CD4-positive, alpha-beta T cell (primary cell): ENCODE measurements at regions of chr5 and their contacts with region 1.

Region 1: GRCh38 chr5:14581333-14581890 is at the start of gene OTULINL:
- DNase-seq: peak; percentile 79 to 92 (median 86)
- ATAC-seq: peak; percentile 81
- H3K4me3 ChIP-seq: peak within 1 kb of the TSS; percentile 69
- H3K4me3 Mint-ChIP-seq: peak within 1 kb of the TSS; percentile 90
- H3K27ac ChIP-seq: peak within 1 kb of the TSS; percentile 67 to 79
- H3K27ac Mint-ChIP-seq: peak within 1 kb of the TSS; percentile 93
- H3K4me1 ChIP-seq: peaks cover 34% of the 10 kb centered on the region
- H3K4me1 Mint-ChIP-seq: peaks cover 44% of the 10 kb centered on the region
- H3K27me3 ChIP-seq: no peaks in the 10 kb centered on the region
- H3K27me3 Mint-ChIP-seq: no peaks in the 10 kb centered on the region
- CTCF ChIP-seq: no peak
- total RNA-seq, gene OTULINL: 55.6 to 60.9 TPM

Region 2: DNA sequence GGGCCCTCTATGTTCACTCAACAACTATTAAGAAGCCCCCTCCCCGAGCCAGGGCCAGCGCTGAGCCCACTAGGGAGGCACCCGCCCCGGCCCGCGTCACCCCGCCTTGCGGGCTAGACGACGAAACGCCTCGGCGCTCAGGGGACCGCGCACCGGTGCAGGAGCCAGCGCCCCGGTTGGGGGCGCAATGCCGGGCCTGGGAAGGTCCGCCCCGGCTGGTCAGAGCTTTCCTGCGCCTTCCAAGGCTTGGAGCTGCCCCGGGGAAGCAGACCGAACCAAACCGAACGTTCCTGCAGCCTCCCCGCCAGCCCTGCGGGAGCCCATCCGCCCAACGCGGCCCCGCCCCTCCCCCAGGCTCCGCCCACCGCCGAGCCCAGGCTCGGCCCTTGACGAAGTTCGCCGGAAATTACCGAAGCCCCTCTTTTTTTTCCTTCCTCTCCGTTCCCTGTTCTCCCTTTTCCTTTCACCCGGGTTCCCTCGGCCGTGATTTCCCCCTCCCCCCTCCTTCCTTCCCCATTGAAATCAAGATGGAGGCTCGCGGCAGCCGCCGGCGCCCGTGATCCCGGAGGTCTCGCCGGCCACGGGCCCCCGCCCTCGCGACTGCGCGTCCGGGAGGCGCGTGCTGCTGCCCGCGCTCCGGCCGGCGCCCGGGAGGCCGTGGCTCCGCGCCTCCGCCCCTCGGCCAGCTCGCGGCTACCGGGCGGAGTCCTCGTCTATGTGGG is 438.4 kb before region 1 on chr5 and contains the start of gene TRIO:
- CTCF ChIA-PET with region 1: no interaction called
- POLR2A ChIA-PET with region 1: no interaction called
- intact Hi-C with region 1: loop called in 1 of 2 experiments (anchors 5 kb)
- DNase-seq: peak; percentile 49 to 86 (median 68)
- ATAC-seq: peak; percentile 58
- H3K4me3 ChIP-seq: peak within 1 kb of the TSS; percentile 60
- H3K4me3 Mint-ChIP-seq: peak within 1 kb of the TSS; percentile 93
- H3K27ac ChIP-seq: no peak within 1 kb of the TSS
- H3K27ac Mint-ChIP-seq: peak within 1 kb of the TSS; percentile 47
- H3K4me1 ChIP-seq: peaks cover 19% of the 10 kb centered on the region
- H3K4me1 Mint-ChIP-seq: peaks cover 14% of the 10 kb centered on the region
- H3K27me3 ChIP-seq: peaks cover 25 to 27% of the 10 kb centered on the region in 2 experiments
- H3K27me3 Mint-ChIP-seq: peaks cover 46% of the 10 kb centered on the region
- CTCF ChIP-seq: peak; percentile 29
- total RNA-seq, gene TRIO: 4.1 to 6.5 TPM

Region 3: DNA sequence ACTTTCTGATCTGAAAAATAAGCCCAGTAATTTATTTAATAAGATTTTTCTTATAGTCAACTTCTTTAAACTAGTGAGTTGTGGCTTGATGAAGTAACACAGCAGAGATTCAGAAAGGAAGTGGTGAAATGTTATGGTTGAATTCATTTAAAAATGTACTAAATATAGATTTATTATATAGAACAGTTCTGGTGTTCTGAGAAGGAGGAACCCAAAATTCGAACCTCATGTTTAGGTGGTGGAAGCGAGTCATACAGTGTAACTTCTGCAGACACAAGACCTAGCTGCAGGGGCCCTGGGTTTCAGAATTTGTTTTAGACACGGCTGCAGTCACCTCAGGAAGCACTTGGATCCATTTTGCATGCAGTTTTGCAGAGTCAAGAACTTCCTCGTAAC is 250.0 kb before region 1 on chr5:
- CTCF ChIA-PET with region 1: no interaction called
- POLR2A ChIA-PET with region 1: no interaction called
- intact Hi-C with region 1: no loop called
- DNase-seq: peak in 3 of 14 experiments; percentile 8 to 21 (median 19)
- ATAC-seq: peak; percentile 55
- H3K4me3 ChIP-seq: no peak overlapping the region
- H3K4me3 Mint-ChIP-seq: peak overlapping the region; percentile 9
- H3K27ac ChIP-seq: no peak overlapping the region
- H3K27ac Mint-ChIP-seq: peak overlapping the region; percentile 43
- H3K4me1 ChIP-seq: no peaks in the 10 kb centered on the region
- H3K4me1 Mint-ChIP-seq: peaks cover 22% of the 10 kb centered on the region
- H3K27me3 ChIP-seq: no peaks in the 10 kb centered on the region
- H3K27me3 Mint-ChIP-seq: no peaks in the 10 kb centered on the region
- CTCF ChIP-seq: no peak

Region 4: DNA sequence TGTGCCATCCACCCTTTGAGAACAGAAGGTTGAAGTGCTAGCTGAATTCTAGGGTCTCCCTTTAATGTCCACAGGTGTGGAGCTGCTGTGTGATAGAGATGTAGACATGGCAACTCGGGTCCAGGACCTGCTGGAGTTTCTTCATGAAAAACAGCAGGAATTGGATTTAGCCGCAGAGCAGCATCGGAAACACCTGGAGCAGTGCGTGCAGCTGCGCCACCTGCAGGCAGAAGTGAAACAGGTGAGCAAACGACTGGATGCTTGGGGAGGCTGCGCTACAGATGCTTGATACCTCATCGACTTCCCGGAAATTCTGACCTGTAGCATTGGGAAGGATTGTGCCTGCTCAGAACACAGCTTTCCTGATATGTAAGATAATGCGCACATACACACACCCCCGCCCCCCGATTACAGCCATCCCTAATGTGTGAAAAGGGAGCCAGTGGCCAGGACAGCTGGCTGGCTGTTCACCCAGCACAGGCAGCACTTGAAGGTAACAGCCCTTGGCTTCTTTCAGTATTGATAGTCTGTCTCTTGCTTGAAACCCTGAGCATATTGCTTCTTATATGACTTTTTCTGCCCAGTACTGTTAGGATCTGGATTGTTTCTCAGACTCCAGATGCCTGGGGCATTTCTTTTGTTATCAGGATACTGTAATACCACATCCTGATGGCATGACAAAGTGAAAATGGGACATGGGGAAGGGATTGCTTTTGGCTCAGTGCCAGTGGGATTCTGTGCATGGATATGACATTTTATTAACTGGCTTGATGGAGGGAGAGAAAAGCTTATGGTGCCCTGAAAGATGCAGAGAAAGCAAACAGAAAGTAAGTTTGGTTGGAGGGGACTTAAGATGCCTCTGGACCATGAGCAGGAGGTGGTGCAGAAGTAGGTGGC is 216.6 kb before region 1 on chr5:
- CTCF ChIA-PET with region 1: no interaction called
- POLR2A ChIA-PET with region 1: no interaction called
- intact Hi-C with region 1: no loop called
- DNase-seq: peak in 6 of 14 experiments; percentile 5 to 31 (median 14)
- ATAC-seq: no peak
- H3K4me3 ChIP-seq: no peak overlapping the region
- H3K4me3 Mint-ChIP-seq: no peak overlapping the region
- H3K27ac ChIP-seq: no peak overlapping the region
- H3K27ac Mint-ChIP-seq: no peak overlapping the region
- H3K4me1 ChIP-seq: peaks cover 17% of the 10 kb centered on the region
- H3K4me1 Mint-ChIP-seq: peaks cover 36% of the 10 kb centered on the region
- H3K27me3 ChIP-seq: peaks cover 0 to 4% of the 10 kb centered on the region in 2 experiments
- H3K27me3 Mint-ChIP-seq: no peaks in the 10 kb centered on the region
- CTCF ChIP-seq: no peak

Region 5: GRCh38 chr5:14415024-14415697 is 166.3 kb before region 1 on chr5:
- CTCF ChIA-PET with region 1: interaction called, 6 read pairs
- POLR2A ChIA-PET with region 1: interaction called, 22 read pairs
- intact Hi-C with region 1: loop called (anchors 1 to 5 kb)
- DNase-seq: peak in 5 of 14 experiments; percentile 14 to 41 (median 27)
- ATAC-seq: no peak
- H3K4me3 ChIP-seq: no peak overlapping the region
- H3K4me3 Mint-ChIP-seq: peak overlapping the region; percentile 78
- H3K27ac ChIP-seq: peak overlapping the region in 1 of 2 donors; percentile 61
- H3K27ac Mint-ChIP-seq: peak overlapping the region; percentile 88
- H3K4me1 ChIP-seq: peaks cover 37% of the 10 kb centered on the region
- H3K4me1 Mint-ChIP-seq: peaks cover 46% of the 10 kb centered on the region
- H3K27me3 ChIP-seq: no peaks in the 10 kb centered on the region
- H3K27me3 Mint-ChIP-seq: no peaks in the 10 kb centered on the region
- CTCF ChIP-seq: no peak

Region 6: GRCh38 chr5:14552017-14552416 is 29.4 kb before region 1 on chr5:
- CTCF ChIA-PET with region 1: no interaction called
- POLR2A ChIA-PET with region 1: no interaction called
- intact Hi-C with region 1: no loop called
- DNase-seq: no peak
- ATAC-seq: no peak
- H3K4me3 ChIP-seq: no peak overlapping the region
- H3K4me3 Mint-ChIP-seq: no peak overlapping the region
- H3K27ac ChIP-seq: no peak overlapping the region
- H3K27ac Mint-ChIP-seq: no peak overlapping the region
- H3K4me1 ChIP-seq: no peaks in the 10 kb centered on the region
- H3K4me1 Mint-ChIP-seq: no peaks in the 10 kb centered on the region
- H3K27me3 ChIP-seq: peaks cover 0 to 8% of the 10 kb centered on the region in 2 experiments
- H3K27me3 Mint-ChIP-seq: no peaks in the 10 kb centered on the region
- CTCF ChIP-seq: no peak

Region 7: GRCh38 chr5:14595189-14595588 is 13.8 kb after region 1 on chr5:
- CTCF ChIA-PET with region 1: interaction called, 13 read pairs
- POLR2A ChIA-PET with region 1: interaction called, 85 read pairs
- intact Hi-C with region 1: loop called (anchors 1 to 2 kb)
- DNase-seq: peak in 7 of 14 experiments; percentile 12 to 78 (median 51)
- ATAC-seq: peak; percentile 76
- H3K4me3 ChIP-seq: peak overlapping the region; percentile 37
- H3K4me3 Mint-ChIP-seq: peak overlapping the region; percentile 83
- H3K27ac ChIP-seq: peak overlapping the region; percentile 68 to 81
- H3K27ac Mint-ChIP-seq: peak overlapping the region; percentile 91
- H3K4me1 ChIP-seq: peaks cover 74% of the 10 kb centered on the region
- H3K4me1 Mint-ChIP-seq: peaks cover 89% of the 10 kb centered on the region
- H3K27me3 ChIP-seq: no peaks in the 10 kb centered on the region
- H3K27me3 Mint-ChIP-seq: no peaks in the 10 kb centered on the region
- CTCF ChIP-seq: no peak

Region 8: GRCh38 chr5:14664302-14665100 is 83.1 kb after region 1 on chr5 and contains the start of gene OTULIN:
- CTCF ChIA-PET with region 1: no interaction called
- POLR2A ChIA-PET with region 1: interaction called, 6 read pairs
- intact Hi-C with region 1: loop called (anchors 2 to 10 kb)
- DNase-seq: peak; percentile 62 to 96 (median 80)
- ATAC-seq: peak; percentile 73
- H3K4me3 ChIP-seq: peak within 1 kb of the TSS; percentile 75
- H3K4me3 Mint-ChIP-seq: peak within 1 kb of the TSS; percentile 90
- H3K27ac ChIP-seq: peak within 1 kb of the TSS; percentile 77 to 82
- H3K27ac Mint-ChIP-seq: peak within 1 kb of the TSS; percentile 90
- H3K4me1 ChIP-seq: peaks cover 52% of the 10 kb centered on the region
- H3K4me1 Mint-ChIP-seq: peaks cover 77% of the 10 kb centered on the region
- H3K27me3 ChIP-seq: no peaks in the 10 kb centered on the region
- H3K27me3 Mint-ChIP-seq: no peaks in the 10 kb centered on the region
- CTCF ChIP-seq: no peak
- total RNA-seq, gene OTULIN: 69.4 to 77.0 TPM